ENCODE measurements at regions of chr9 and their contacts with region 1.

Region 1: GRCh38 chr9:5832543-5833529 is at the start of gene ERMP1:
- DNase-seq: peak; percentile 94
- H3K4me3 Mint-ChIP-seq: peak within 1 kb of the TSS; percentile 86
- H3K27ac Mint-ChIP-seq: peak within 1 kb of the TSS; percentile 65
- H3K4me1 Mint-ChIP-seq: peaks cover 42% of the 10 kb centered on the region
- H3K27me3 Mint-ChIP-seq: no peaks in the 10 kb centered on the region
- total RNA-seq, gene ERMP1: 23.2 to 24.0 TPM

Region 2: DNA sequence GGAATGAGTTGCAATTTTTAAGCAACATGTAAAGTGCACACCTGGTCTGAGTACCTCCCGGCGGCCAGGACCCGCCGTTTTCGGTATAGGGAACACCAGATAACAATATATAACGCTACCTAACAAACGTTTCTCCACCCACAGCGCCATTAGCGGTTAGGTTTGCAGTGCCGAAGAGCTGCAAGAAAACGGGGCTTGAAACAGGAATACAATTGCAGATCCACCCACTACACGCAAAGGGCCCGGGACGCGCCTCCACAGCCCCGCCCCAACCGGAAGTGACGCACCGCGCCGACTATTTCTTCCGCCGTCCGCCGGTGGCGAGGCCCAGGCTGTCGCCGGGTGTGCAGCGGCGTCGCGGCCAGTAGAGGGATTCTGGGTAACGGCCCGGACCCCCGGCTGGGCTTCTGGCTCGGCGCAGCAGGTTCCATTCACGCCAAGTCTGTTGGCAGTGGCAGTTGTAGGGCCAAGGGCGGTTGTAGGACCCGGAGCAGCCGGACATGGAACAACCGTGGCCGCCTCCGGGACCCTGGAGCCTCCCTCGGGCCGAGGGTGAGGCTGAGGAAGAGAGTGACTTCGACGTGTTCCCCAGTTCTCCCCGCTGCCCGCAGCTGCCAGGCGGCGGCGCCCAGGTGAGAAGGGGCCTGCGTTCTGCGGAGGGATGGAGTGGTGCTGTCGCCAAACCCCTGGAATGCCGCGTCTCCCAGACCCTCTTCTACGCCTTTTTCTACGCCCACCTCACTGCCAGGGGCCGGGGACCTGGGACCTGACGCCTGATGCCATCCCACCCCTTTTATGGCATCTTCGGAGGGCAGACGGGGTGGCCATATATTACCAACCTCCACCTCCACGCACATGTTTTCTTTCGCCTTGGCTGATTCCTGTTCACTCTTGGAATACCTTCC is 1153.3 kb before region 1 on chr9 and contains the start of gene CDC37L1:
- CTCF ChIA-PET with region 1: no interaction called
- POLR2A ChIA-PET with region 1: no interaction called
- intact Hi-C with region 1: loop called (anchors 5 kb)
- DNase-seq: peak; percentile 99
- H3K4me3 Mint-ChIP-seq: no peak within 1 kb of the TSS
- H3K27ac Mint-ChIP-seq: no peak within 1 kb of the TSS
- H3K4me1 Mint-ChIP-seq: peaks cover 10% of the 10 kb centered on the region
- H3K27me3 Mint-ChIP-seq: no peaks in the 10 kb centered on the region
- total RNA-seq, gene CDC37L1: 9.7 to 11.0 TPM

Region 3: GRCh38 chr9:5764130-5764868 is 68.5 kb before region 1 on chr9:
- CTCF ChIA-PET with region 1: interaction called, 5 read pairs
- POLR2A ChIA-PET with region 1: no interaction called
- intact Hi-C with region 1: loop called (anchors 2 kb)
- DNase-seq: peak; percentile 24
- H3K4me3 Mint-ChIP-seq: no peak overlapping the region
- H3K27ac Mint-ChIP-seq: peak overlapping the region; percentile 31
- H3K4me1 Mint-ChIP-seq: peaks cover 58% of the 10 kb centered on the region
- H3K27me3 Mint-ChIP-seq: no peaks in the 10 kb centered on the region

Region 4: DNA sequence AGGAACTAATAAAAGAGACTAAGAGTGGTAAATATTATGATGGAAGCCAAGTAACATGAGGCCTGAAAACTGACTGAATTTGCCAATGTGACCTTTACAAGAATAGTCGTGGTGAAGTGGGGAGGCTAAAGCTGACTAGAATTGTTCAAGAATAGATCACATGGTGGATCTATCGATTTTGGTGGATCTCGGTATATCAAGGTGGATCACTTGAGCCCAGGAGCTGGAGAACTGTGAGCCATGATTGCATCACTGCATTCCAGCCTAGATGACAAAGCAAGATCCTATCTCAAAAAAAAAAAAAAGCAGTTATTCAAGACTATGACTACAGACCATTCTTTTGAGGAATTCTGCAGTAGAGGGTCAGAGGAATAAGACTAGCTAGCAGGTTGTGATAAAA is 15.0 kb before region 1 on chr9:
- CTCF ChIA-PET with region 1: interaction called, 33 read pairs
- POLR2A ChIA-PET with region 1: no interaction called
- intact Hi-C with region 1: no loop called
- DNase-seq: no peak
- H3K4me3 Mint-ChIP-seq: no peak overlapping the region
- H3K27ac Mint-ChIP-seq: no peak overlapping the region
- H3K4me1 Mint-ChIP-seq: peaks cover 12% of the 10 kb centered on the region
- H3K27me3 Mint-ChIP-seq: no peaks in the 10 kb centered on the region

Region 5: GRCh38 chr9:5851445-5851844 is 18.6 kb after region 1 on chr9:
- CTCF ChIA-PET with region 1: interaction called, 32 read pairs
- POLR2A ChIA-PET with region 1: interaction called, 6 read pairs
- intact Hi-C with region 1: loop called (anchors 2 kb)
- DNase-seq: peak; percentile 66
- H3K4me3 Mint-ChIP-seq: no peak overlapping the region
- H3K27ac Mint-ChIP-seq: peak overlapping the region; percentile 70
- H3K4me1 Mint-ChIP-seq: peaks cover 46% of the 10 kb centered on the region
- H3K27me3 Mint-ChIP-seq: no peaks in the 10 kb centered on the region